ENCODE measurements at regions of chr15 and their contacts with region 1.

Region 1: DNA sequence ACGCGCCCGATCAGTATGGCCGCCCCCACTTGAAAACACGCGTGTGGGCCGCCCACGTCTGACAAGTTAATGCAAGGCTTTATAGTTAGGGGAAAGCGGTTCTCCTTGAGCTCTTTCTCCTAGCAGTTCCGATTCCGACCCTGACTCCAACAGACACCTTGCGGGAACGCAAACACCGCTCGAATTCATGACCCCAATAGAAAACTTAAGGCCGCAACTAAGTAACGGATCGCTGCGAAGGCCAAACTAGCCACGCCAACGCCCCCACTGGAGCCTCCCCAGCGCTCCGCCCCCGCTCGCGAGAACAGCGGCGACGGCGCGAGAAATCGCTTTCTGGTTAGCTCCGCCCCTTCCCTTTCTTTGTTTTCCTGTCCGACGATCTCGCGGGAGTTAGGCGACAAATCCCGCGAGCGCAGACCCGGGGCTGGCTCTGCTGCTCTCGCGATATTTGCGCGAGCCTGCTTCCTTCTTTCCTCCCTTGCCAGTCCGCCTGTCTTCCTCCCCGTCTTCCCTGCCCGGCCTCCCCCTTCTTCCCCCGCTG is at the start of gene IREB2:
- DNase-seq: peak; percentile 96
- ATAC-seq: peak; percentile 90
- H3K4me3 ChIP-seq: peak within 1 kb of the TSS; percentile 94 to 97 (median 96)
- H3K27ac ChIP-seq: peak within 1 kb of the TSS; percentile 99
- H3K4me1 ChIP-seq: peaks cover 57% of the 10 kb centered on the region
- H3K27me3 ChIP-seq: no peaks in the 10 kb centered on the region; a peak in 1 of 5 replicates
- CTCF ChIP-seq: no peak
- EP300 ChIP-seq: peak in 1 of 2 experiments; percentile 48; a peak in 2 of 4 replicates
- POLR2A ChIP-seq: peak; percentile 74 to 81
- RAD21 ChIP-seq: peak; percentile 41; the same call in 1 of the 2 replicates
- total RNA-seq, gene IREB2: 30.4 and 66.4 TPM in 2 replicates

Region 2: GRCh38 chr15:78299101-78299930 is 138.5 kb before region 1 on chr15 and contains the start of gene SKIC8:
- CTCF ChIA-PET with region 1: no interaction called
- POLR2A ChIA-PET with region 1: interaction called, 54 read pairs
- in situ Hi-C with region 1: no loop called
- intact Hi-C with region 1: no loop called
- DNase-seq: peak; percentile 92
- ATAC-seq: peak; percentile 91
- H3K4me3 ChIP-seq: peak within 1 kb of the TSS; percentile 78 to 95 (median 93)
- H3K27ac ChIP-seq: peak within 1 kb of the TSS; percentile 61
- H3K4me1 ChIP-seq: peaks cover 61% of the 10 kb centered on the region
- H3K27me3 ChIP-seq: no peaks in the 10 kb centered on the region; a peak in 1 of 5 replicates
- CTCF ChIP-seq: no peak
- EP300 ChIP-seq: 0 out of 4 replicates have a peak, but pooled peaks have one; percentile 19 to 31
- POLR2A ChIP-seq: peak; percentile 93 to 95
- RAD21 ChIP-seq: 0 out of 2 replicates have a peak, but pooled peaks have one; percentile 24
- total RNA-seq, gene SKIC8: 69.5 and 98.2 TPM in 2 replicates

Region 3: GRCh38 chr15:78396976-78397375 is 40.9 kb before region 1 on chr15:
- CTCF ChIA-PET with region 1: no interaction called
- POLR2A ChIA-PET with region 1: interaction called, 12 read pairs
- in situ Hi-C with region 1: no loop called
- intact Hi-C with region 1: no loop called
- DNase-seq: peak; percentile 70
- ATAC-seq: peak; percentile 95
- H3K4me3 ChIP-seq: no peak overlapping the region
- H3K27ac ChIP-seq: no peak overlapping the region
- H3K4me1 ChIP-seq: peaks cover 17% of the 10 kb centered on the region
- H3K27me3 ChIP-seq: peaks cover 0 to 5% of the 10 kb centered on the region in 2 experiments; a peak in 1 of 5 replicates
- CTCF ChIP-seq: peak; percentile 66
- EP300 ChIP-seq: no peak
- POLR2A ChIP-seq: no peak
- RAD21 ChIP-seq: 0 out of 2 replicates have a peak, but pooled peaks have one; percentile 28

Region 4: DNA sequence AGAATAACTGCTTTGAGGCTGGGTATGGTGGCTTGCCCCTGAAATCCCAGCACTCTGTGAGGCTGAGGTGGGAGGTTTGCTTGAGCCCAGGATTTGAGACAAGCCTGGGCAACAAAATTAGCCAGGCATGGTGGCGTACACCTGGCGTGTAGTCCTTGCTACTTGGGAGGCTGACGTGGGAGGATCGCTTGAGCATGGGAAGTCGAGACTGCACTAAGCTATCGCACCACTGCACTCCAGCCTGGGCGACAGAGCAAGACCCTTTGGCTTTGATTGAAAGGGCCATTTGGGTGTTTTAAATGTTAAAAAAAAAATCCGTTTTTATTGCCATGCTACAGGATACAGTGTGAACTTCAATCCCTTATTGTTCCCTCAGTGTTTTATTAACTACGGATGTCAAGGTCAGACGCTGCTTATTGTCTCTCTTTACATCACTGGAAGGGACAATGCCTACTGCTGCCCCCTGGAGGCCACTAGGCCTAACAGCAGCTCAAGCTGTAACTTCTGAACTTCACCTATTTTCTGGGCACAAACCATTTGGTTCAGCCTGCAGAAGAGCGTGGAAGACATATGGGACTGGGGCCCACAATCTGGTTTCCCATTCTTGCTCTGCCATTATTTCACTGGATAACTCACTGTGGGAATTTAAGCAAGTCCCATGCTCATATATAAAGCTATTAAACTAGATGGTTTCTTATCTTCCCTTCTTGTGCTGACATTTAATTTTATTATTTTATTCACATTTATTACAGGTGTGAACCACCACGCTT is 15.1 kb before region 1 on chr15:
- CTCF ChIA-PET with region 1: no interaction called
- POLR2A ChIA-PET with region 1: interaction called, 22 read pairs
- in situ Hi-C with region 1: no loop called
- intact Hi-C with region 1: no loop called
- DNase-seq: peak; percentile 70
- ATAC-seq: peak; percentile 68
- H3K4me3 ChIP-seq: peak overlapping the region in 1 of 3 experiments; percentile 7; a peak in 2 of 6 replicates
- H3K27ac ChIP-seq: no peak overlapping the region
- H3K4me1 ChIP-seq: peaks cover 49% of the 10 kb centered on the region
- H3K27me3 ChIP-seq: no peaks in the 10 kb centered on the region; a peak in 1 of 5 replicates
- CTCF ChIP-seq: peak; percentile 87
- EP300 ChIP-seq: no peak
- POLR2A ChIP-seq: no peak
- RAD21 ChIP-seq: peak; percentile 62

Region 5: GRCh38 chr15:78506971-78507830 is 69.4 kb after region 1 on chr15 and contains the start of gene HYKK:
- CTCF ChIA-PET with region 1: no interaction called
- POLR2A ChIA-PET with region 1: interaction called, 12 read pairs
- in situ Hi-C with region 1: no loop called
- intact Hi-C with region 1: no loop called
- DNase-seq: peak; percentile 98
- ATAC-seq: peak; percentile 97
- H3K4me3 ChIP-seq: peak within 1 kb of the TSS; percentile 69 to 84 (median 83)
- H3K27ac ChIP-seq: peak within 1 kb of the TSS; percentile 55
- H3K4me1 ChIP-seq: peaks cover 29% of the 10 kb centered on the region
- H3K27me3 ChIP-seq: no peaks in the 10 kb centered on the region; a peak in 1 of 5 replicates
- CTCF ChIP-seq: peak; percentile 34; the same call in 1 of the 2 replicates
- EP300 ChIP-seq: no peak
- POLR2A ChIP-seq: peak; percentile 49 to 82
- RAD21 ChIP-seq: 0 out of 2 replicates have a peak, but pooled peaks have one; percentile 17
- total RNA-seq, gene HYKK: 5.4 and 6.5 TPM in 2 replicates